ENCODE measurements at regions of chr4 and their contacts with region 1.

Region 1: DNA sequence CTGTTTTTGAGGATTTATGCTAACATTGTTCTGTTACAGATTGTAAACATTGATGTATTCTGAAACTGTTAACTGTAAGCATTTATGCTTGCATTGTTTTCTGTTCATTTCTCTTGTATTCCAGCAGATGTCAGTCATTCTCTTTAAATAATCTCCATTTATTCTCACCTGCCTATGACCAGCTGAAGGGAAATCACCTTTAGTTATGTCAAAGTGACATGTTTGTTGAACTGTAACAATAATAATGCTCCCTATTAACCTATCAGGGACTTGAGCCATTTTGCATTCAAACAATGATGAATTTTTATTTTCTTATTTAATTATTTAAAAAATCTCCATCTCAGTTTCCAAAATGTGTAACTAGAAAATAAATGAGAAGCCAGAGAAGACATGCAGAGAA is 58.0 kb downstream of the SPCS3 start:
- DNase-seq: peak; percentile 43
- ATAC-seq: peak; percentile 53; the same call in 1 of the 2 replicates
- H3K4me3 ChIP-seq: no peak overlapping the region
- H3K27ac ChIP-seq: no peak overlapping the region
- H3K4me1 ChIP-seq: no peaks in the 10 kb centered on the region
- H3K27me3 ChIP-seq: no peaks in the 10 kb centered on the region
- CTCF ChIP-seq: peak; percentile 65
- POLR2A ChIP-seq: no peak
- RAD21 ChIP-seq: peak; percentile 82

Region 2: DNA sequence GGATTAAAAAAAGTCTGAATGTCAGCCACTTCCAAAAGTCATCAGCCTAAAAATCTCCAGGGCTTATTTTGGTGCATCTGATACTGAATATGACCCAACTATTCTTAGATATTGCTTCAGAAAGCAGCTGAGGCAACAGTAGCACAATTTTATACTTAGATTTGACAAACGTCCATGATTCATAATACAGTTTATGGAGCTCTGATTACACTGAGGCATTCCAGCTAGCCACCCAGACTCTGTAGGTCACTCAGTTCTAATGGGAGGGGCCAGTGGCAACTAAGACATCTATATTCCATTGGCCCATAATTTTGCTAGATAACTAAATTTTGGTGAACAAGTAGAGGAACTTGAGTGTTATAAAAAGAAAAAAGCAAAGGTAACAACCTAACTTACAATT is 192.7 kb before region 1 on chr4:
- CTCF ChIA-PET with region 1: no interaction called
- POLR2A ChIA-PET with region 1: no interaction called
- dilution Hi-C with region 1: no loop called
- in situ Hi-C with region 1: no loop called
- intact Hi-C with region 1: no loop called
- DNase-seq: peak; percentile 92
- ATAC-seq: peak; percentile 98
- H3K4me3 ChIP-seq: no peak overlapping the region
- H3K27ac ChIP-seq: no peak overlapping the region
- H3K4me1 ChIP-seq: peaks cover 9% of the 10 kb centered on the region; the same call in 1 of the 2 replicates
- H3K27me3 ChIP-seq: no peaks in the 10 kb centered on the region
- CTCF ChIP-seq: no peak
- POLR2A ChIP-seq: no peak
- RAD21 ChIP-seq: no peak

Region 3: DNA sequence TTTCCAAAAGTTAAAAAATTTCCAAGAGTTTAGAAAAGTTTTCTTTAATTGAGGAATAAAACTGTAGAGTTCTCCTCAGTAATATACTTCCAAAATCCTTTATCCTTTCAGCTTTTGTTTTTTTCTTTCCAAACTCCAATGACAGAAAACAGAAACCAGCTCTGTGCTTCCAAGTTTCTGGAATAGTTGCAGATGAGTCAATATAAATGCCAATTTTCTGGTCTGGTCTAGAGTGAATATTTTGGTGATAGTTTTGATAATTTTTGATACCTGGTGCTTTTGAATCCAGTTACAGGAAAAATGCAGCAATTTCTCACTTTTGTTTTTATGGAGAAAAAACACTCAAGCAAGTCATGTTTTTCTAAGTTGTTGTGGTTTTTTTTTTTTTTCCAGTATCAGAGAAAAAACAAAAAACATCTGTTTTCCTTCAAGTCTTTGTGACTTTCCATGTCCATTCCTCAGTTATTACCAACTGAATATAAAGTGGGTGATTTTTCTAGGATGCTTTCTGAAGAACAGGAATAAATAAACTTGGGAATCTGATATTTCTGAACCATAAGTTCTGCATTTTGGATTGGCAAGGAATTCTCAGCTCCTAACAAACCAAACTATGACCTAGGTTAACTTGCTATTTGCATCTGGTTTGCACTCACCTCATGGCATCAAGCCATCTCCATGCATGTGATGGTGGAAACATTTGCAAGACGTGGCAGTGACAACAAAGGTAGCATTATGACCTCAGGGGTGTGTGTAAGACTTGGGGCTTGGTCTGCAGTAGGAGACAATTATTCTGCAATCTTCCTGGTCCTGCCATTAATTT is 275.8 kb after region 1 on chr4:
- CTCF ChIA-PET with region 1: no interaction called
- POLR2A ChIA-PET with region 1: no interaction called
- dilution Hi-C with region 1: no loop called
- in situ Hi-C with region 1: loop called (anchors 25 kb)
- intact Hi-C with region 1: loop called (anchors 5 kb)
- DNase-seq: peak; percentile 31
- ATAC-seq: no peak
- H3K4me3 ChIP-seq: no peak overlapping the region
- H3K27ac ChIP-seq: no peak overlapping the region
- H3K4me1 ChIP-seq: 0 out of 2 replicates have a peak, but pooled peaks cover 1% of the 10 kb centered on the region
- H3K27me3 ChIP-seq: no peaks in the 10 kb centered on the region
- CTCF ChIP-seq: no peak
- POLR2A ChIP-seq: no peak
- RAD21 ChIP-seq: no peak

Region 4: DNA sequence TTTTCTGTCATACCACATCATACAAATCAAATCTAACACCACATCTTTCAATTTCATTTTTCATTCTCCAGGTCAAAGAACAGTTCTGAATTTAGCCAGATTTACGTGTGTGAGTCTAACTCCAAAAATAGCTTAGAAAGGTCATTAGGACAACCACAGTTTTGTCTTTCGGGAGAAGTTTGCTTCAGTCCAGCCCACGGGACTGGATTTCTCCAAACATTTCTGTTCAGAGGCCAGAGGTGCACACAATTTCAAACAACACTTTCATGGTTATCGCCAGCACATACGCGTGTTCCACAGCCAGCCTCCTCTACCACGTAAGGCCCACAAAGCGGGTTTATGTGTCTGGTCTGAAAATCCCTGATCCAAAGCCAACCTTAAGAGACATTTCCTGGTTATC is 349.0 kb after region 1 on chr4:
- CTCF ChIA-PET with region 1: no interaction called
- POLR2A ChIA-PET with region 1: no interaction called
- dilution Hi-C with region 1: no loop called
- in situ Hi-C with region 1: no loop called
- intact Hi-C with region 1: loop called (anchors 5 kb)
- DNase-seq: peak; percentile 97
- ATAC-seq: peak; percentile 81
- H3K4me3 ChIP-seq: no peak overlapping the region
- H3K27ac ChIP-seq: peak overlapping the region; percentile 30; the same call in 1 of the 2 replicates
- H3K4me1 ChIP-seq: peaks cover 9% of the 10 kb centered on the region
- H3K27me3 ChIP-seq: no peaks in the 10 kb centered on the region
- CTCF ChIP-seq: no peak
- POLR2A ChIP-seq: no peak
- RAD21 ChIP-seq: no peak

Region 5: GRCh38 chr4:176902710-176903323 is 525.0 kb after region 1 on chr4:
- CTCF ChIA-PET with region 1: no interaction called
- POLR2A ChIA-PET with region 1: no interaction called
- dilution Hi-C with region 1: no loop called
- in situ Hi-C with region 1: no loop called
- intact Hi-C with region 1: loop called (anchors 10 kb)
- DNase-seq: peak; percentile 95
- ATAC-seq: peak; percentile 90
- H3K4me3 ChIP-seq: peak overlapping the region; percentile 36; the same call in 1 of the 2 replicates
- H3K27ac ChIP-seq: peak overlapping the region; percentile 63
- H3K4me1 ChIP-seq: peaks cover 6% of the 10 kb centered on the region; the same call in 1 of the 2 replicates
- H3K27me3 ChIP-seq: no peaks in the 10 kb centered on the region
- CTCF ChIP-seq: no peak
- POLR2A ChIP-seq: no peak
- RAD21 ChIP-seq: no peak; the same call in 1 of the 2 replicates

Region 6: GRCh38 chr4:177108708-177109107 is 730.9 kb after region 1 on chr4:
- CTCF ChIA-PET with region 1: no interaction called
- POLR2A ChIA-PET with region 1: no interaction called
- dilution Hi-C with region 1: no loop called
- in situ Hi-C with region 1: no loop called
- intact Hi-C with region 1: loop called (anchors 5 kb)
- DNase-seq: peak; percentile 68
- ATAC-seq: peak; percentile 99
- H3K4me3 ChIP-seq: no peak overlapping the region
- H3K27ac ChIP-seq: no peak overlapping the region
- H3K4me1 ChIP-seq: no peaks in the 10 kb centered on the region
- H3K27me3 ChIP-seq: no peaks in the 10 kb centered on the region
- CTCF ChIP-seq: peak; percentile 76
- POLR2A ChIP-seq: no peak
- RAD21 ChIP-seq: peak; percentile 79

Region 7: DNA sequence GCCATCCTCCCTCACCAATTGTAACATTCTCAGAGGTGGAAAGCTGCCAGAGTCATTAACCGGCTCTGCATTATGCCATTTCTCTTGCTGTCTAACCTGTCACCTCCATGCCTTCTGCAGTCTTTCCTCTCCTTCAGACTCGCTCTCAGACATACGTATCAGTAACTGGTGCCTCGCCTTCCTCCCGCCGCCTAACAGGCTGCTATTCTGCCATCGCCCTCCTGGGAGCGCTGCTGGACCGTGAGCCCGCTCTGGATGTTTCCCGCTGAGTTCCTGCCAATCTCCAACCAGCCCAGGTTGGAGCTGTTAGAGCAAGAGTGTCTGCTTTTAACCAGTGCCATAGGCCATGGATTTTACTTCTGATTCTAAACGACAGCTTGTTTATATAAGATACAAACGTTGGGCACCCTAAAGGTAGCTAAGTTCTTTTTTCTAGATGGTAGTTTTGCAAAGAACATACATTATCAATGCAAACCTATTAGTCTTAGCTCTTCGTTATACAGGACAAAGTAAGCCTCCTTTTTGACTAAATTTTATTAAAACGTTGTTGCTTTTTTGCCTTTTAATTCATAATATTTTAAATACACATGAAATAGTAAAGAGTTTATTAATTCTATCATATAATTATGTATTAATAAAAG is 872.4 kb after region 1 on chr4:
- CTCF ChIA-PET with region 1: no interaction called
- POLR2A ChIA-PET with region 1: no interaction called
- dilution Hi-C with region 1: no loop called
- in situ Hi-C with region 1: no loop called
- intact Hi-C with region 1: loop called (anchors 1 kb)
- DNase-seq: peak; percentile 60
- ATAC-seq: peak; percentile 96
- H3K4me3 ChIP-seq: no peak overlapping the region
- H3K27ac ChIP-seq: no peak overlapping the region
- H3K4me1 ChIP-seq: no peaks in the 10 kb centered on the region; the same call in 1 of the 2 replicates
- H3K27me3 ChIP-seq: no peaks in the 10 kb centered on the region
- CTCF ChIP-seq: peak; percentile 93
- POLR2A ChIP-seq: no peak; the same call in 1 of the 2 replicates
- RAD21 ChIP-seq: peak; percentile 98